ENCODE measurements at regions of chr5 and their contacts with region 1.

Region 1: DNA sequence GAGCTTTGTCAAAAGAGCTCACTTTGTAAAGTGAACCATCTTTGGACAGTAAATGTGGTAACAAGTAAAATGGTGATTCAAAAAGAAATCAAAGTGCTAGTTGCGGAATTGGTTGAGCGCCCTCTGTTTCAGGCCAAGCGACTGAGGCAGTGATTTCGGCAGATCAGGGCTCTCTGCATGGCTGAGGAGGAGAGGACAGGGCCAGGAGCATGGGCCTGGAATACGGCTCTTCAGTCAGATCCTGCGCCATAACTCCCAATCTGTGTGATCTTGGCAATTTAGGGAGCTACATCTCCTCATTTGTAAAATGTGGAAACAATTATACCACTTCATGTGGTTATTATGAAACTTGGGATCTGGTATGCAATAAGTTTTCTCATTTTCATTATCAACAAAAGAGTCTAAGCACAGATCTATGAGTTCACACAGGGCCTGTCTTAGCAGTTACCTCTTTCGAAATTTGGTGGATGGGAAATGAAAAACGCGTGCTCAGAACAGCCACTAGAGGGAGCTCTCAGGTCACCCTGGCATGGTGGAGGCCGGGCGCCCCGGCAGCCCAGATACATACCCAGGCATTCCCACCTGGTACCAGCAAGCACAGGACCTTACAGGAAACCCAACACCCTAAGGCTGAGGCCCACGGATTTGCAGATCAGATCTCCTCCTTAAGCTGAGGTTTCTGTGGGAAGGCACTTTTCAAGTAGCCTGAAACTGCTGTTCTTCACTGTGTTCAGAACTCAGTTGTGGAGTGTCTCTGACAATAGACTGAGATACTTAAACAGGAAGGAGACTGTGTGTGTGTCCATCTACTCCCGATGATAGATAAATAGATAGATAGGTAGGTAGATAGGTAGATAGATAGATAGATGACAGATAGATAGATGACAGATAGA is 303.7 kb downstream of the RAB3C start:
- DNase-seq: peak; percentile 71
- H3K4me3 Mint-ChIP-seq: no peak overlapping the region
- H3K27ac Mint-ChIP-seq: no peak overlapping the region
- H3K4me1 Mint-ChIP-seq: peaks cover 9% of the 10 kb centered on the region
- H3K27me3 Mint-ChIP-seq: peaks cover 48% of the 10 kb centered on the region
- CTCF ChIP-seq: peak; percentile 69

Region 2: DNA sequence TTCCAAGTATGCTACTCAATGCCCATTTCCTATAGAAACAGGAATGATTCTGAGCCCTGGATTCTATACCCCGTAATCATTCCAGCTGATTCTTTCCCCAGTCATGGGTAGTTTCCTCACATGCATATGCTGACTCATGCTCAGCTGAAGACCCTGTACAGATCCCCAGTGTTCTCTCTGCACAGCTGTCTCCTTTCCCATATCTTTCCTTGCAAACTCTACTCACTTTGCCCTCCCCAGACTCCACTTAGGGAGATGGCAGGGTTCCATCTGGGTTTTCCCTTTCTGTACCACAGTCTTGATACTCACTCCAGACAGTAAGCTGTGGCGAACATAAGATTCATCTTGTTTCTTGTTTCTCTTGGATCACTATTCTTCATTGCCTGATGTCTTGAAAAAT is 53.9 kb after region 1 on chr5:
- CTCF ChIA-PET with region 1: no interaction called
- intact Hi-C with region 1: no loop called
- DNase-seq: no peak
- H3K4me3 Mint-ChIP-seq: no peak overlapping the region
- H3K27ac Mint-ChIP-seq: no peak overlapping the region
- H3K4me1 Mint-ChIP-seq: no peaks in the 10 kb centered on the region
- H3K27me3 Mint-ChIP-seq: peaks cover 4% of the 10 kb centered on the region
- CTCF ChIP-seq: no peak

Region 3: DNA sequence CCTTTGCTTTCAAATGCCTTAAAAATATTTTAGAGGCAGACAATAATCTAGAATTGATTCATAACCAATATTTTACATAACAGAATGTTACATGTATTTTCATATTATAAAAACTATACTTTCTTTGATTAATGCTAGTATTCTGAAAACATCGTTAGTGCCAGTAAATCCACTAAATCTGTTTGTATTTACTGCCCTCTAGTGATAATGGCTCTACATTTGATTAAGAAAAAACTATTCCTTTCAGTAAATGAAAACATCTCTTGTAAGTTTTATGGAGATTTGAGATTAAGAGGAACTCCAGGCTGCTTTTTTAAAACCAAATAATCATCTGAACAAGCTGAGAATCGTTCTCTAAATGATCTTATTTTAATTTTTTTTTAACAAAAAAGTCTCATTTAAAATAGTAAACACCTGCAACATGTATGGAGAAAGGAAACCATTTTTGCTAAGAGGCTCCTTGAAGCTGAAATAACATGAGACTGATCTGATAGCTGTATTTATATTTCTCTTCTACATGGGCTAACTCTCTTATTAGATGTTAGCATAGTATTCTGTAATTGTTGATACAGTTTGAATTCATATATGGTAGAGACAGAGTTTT is 121.0 kb after region 1 on chr5:
- CTCF ChIA-PET with region 1: no interaction called
- intact Hi-C with region 1: loop called (anchors 1 kb)
- DNase-seq: no peak
- H3K4me3 Mint-ChIP-seq: no peak overlapping the region
- H3K27ac Mint-ChIP-seq: no peak overlapping the region
- H3K4me1 Mint-ChIP-seq: no peaks in the 10 kb centered on the region
- H3K27me3 Mint-ChIP-seq: no peaks in the 10 kb centered on the region
- CTCF ChIP-seq: peak; percentile 14

Region 4: GRCh38 chr5:59174248-59174844 is 287.8 kb after region 1 on chr5:
- CTCF ChIA-PET with region 1: interaction called, 4 read pairs
- intact Hi-C with region 1: loop called (anchors 2 kb)
- DNase-seq: peak; percentile 31
- H3K4me3 Mint-ChIP-seq: no peak overlapping the region
- H3K27ac Mint-ChIP-seq: no peak overlapping the region
- H3K4me1 Mint-ChIP-seq: no peaks in the 10 kb centered on the region
- H3K27me3 Mint-ChIP-seq: no peaks in the 10 kb centered on the region
- CTCF ChIP-seq: peak; percentile 62

Region 5: GRCh38 chr5:59380350-59380951 is 493.9 kb after region 1 on chr5:
- CTCF ChIA-PET with region 1: no interaction called
- intact Hi-C with region 1: loop called (anchors 1 kb)
- DNase-seq: no peak
- H3K4me3 Mint-ChIP-seq: no peak overlapping the region
- H3K27ac Mint-ChIP-seq: no peak overlapping the region
- H3K4me1 Mint-ChIP-seq: no peaks in the 10 kb centered on the region
- H3K27me3 Mint-ChIP-seq: no peaks in the 10 kb centered on the region
- CTCF ChIP-seq: peak; percentile 37

Measured in Calu3 (cell line).